ENCODE measurements at regions of chr1 and their contacts with region 1.

Region 1: GRCh38 chr1:59759156-59759925 is 55.4 kb upstream of the HOOK1 start:
- DNase-seq: peak; percentile 79 to 85
- ATAC-seq: peak; percentile 94 to 98
- H3K4me3 ChIP-seq: peak overlapping the region; percentile 34 to 55 (median 48)
- H3K27ac ChIP-seq: peak overlapping the region; percentile 77 to 84 (median 80)
- H3K4me1 ChIP-seq: peaks cover 16 to 30% of the 10 kb centered on the region in 2 donors
- H3K27me3 ChIP-seq: no peaks in the 10 kb centered on the region
- CTCF ChIP-seq: peak; percentile 95 to 99 (median 98)
- POLR2A ChIP-seq: no peak

Region 2: DNA sequence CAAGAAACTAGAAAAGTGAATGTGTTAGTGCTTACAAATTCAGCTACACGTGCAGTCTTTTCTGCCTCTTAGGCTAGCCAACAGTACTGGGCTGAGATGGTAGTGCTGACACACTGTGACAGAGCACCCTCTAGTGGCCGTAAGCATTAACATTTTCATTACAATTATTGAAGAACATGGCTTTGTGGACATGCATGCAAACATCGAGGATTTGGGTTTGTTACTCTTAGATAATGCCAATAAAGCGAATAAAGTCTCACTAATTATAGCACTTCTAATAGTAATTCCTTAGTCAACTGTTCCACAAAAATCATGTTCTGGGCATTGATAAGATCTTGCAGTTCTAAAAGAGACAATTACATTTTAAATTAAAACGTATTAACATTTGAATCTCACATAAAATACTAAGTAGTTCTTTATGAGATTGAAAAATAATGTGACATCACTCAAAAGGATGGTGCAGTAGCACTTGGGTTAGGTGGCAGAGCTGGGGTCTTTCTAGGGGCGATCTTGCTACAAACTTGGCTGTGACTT is 1106.6 kb before region 1 on chr1:
- in situ Hi-C with region 1: no loop called
- intact Hi-C with region 1: loop called (anchors 5 kb)
- DNase-seq: peak; percentile 11 to 43
- ATAC-seq: peak; percentile 78 to 89
- H3K4me3 ChIP-seq: no peak overlapping the region
- H3K27ac ChIP-seq: no peak overlapping the region
- H3K4me1 ChIP-seq: peaks cover 3 to 5% of the 10 kb centered on the region in 2 donors
- H3K27me3 ChIP-seq: no peaks in the 10 kb centered on the region
- CTCF ChIP-seq: peak; percentile 60 to 83 (median 75)
- POLR2A ChIP-seq: no peak

Region 3: GRCh38 chr1:58739856-58740466 is 1019.4 kb before region 1 on chr1:
- in situ Hi-C with region 1: loop called (anchors 5 to 10 kb)
- intact Hi-C with region 1: loop called (anchors 1 kb)
- DNase-seq: no peak
- ATAC-seq: peak in 1 of 2 donors; percentile 79
- H3K4me3 ChIP-seq: no peak overlapping the region
- H3K27ac ChIP-seq: no peak overlapping the region
- H3K4me1 ChIP-seq: peaks cover 6% of the 10 kb centered on the region in 2 donors
- H3K27me3 ChIP-seq: no peaks in the 10 kb centered on the region
- CTCF ChIP-seq: peak; percentile 78 to 95 (median 83)
- POLR2A ChIP-seq: no peak

Region 4: GRCh38 chr1:59309795-59310548 is 449.4 kb before region 1 on chr1:
- in situ Hi-C with region 1: no loop called
- intact Hi-C with region 1: loop called (anchors 5 kb)
- DNase-seq: peak in 1 of 2 donors; percentile 31
- ATAC-seq: peak; percentile 42 to 53
- H3K4me3 ChIP-seq: peak overlapping the region in 1 of 4 donors; percentile 10
- H3K27ac ChIP-seq: peak overlapping the region; percentile 10 to 66 (median 48)
- H3K4me1 ChIP-seq: peaks cover 6 to 9% of the 10 kb centered on the region in 2 donors
- H3K27me3 ChIP-seq: no peaks in the 10 kb centered on the region
- CTCF ChIP-seq: no peak
- POLR2A ChIP-seq: no peak

Region 5: DNA sequence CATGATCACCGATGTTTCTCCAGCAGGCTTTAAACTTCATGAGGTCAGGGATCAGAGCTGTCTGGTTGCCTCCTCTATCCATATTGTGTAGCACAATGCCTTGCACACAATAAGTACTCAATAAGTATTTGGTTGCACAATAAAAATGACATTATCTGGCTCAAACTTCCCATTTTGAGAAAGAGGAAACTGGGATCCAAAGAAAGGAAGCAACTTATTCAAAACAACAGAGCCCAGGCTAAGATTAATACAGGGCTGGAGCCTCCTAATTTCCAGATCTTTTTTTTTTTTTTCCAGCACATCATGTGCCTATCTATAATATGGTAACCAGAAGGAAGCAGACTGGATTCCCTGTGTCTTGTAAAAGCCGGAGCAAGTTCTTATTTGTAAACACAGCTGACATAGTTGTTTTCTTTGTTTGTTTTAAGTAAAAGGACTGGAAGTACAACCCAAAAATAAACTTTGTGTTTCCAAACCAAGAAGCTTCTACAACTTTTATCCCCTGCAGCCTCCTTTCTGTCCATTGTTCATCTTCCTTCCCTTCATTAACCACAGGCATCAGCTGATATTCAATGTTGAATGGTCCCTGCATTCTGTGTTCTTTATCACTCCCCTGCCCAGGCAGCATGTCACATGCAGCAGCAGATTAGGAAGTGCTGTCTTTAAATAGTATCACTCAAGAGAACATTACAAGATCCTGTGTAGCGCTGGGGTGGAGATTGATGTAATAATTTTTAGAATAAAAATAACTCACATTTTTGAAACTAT is 15.8 kb before region 1 on chr1:
- in situ Hi-C with region 1: no loop called
- intact Hi-C with region 1: no loop called
- DNase-seq: peak in 1 of 2 donors; percentile 40
- ATAC-seq: peak; percentile 85 to 93
- H3K4me3 ChIP-seq: no peak overlapping the region
- H3K27ac ChIP-seq: peak overlapping the region; percentile 60 to 66 (median 64)
- H3K4me1 ChIP-seq: peaks cover 25 to 30% of the 10 kb centered on the region in 2 donors
- H3K27me3 ChIP-seq: no peaks in the 10 kb centered on the region
- CTCF ChIP-seq: no peak
- POLR2A ChIP-seq: no peak

Measured in gastrocnemius medialis (tissue), 4 donors.